ENCODE measurements at regions of chr1 and their contacts with region 1.

Region 1: GRCh38 chr1:20696397-20697329 is 21.1 kb downstream of the KIF17 start:
- DNase-seq: peak; percentile 87 to 89
- ATAC-seq: peak; percentile 94
- H3K4me3 ChIP-seq: peak overlapping the region; percentile 48
- H3K27ac ChIP-seq: peak overlapping the region; percentile 97
- H3K4me1 ChIP-seq: peaks cover 28% of the 10 kb centered on the region
- CTCF ChIP-seq: peak; percentile 81
- EP300 ChIP-seq: no peak
- POLR2A ChIP-seq: no peak
- RAD21 ChIP-seq: peak; percentile 81 to 96

Region 2: DNA sequence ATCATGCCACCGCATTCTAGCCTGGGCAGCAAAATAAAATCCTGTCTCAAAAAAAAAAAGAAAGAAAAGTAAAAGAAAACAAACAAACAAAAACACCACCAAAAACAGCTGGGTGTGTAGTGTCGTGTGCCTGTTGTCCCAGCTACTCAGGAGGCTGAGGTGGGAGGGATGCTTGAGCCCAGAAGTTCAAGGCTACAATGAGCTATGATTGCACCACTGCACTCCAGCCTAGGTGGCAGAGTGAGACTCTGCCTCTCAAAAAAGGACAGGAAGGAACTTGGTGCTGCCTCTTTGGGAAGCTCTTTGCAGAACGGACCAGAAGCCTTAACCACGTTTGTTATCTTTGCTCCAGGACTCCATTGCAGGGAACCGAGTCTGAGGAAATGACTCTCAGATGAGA is 10.2 kb after region 1 on chr1:
- CTCF ChIA-PET with region 1: interaction called, 24 read pairs
- POLR2A ChIA-PET with region 1: no interaction called
- DNase-seq: no peak
- ATAC-seq: no peak
- H3K4me3 ChIP-seq: no peak overlapping the region
- H3K27ac ChIP-seq: no peak overlapping the region
- H3K4me1 ChIP-seq: no peaks in the 10 kb centered on the region
- CTCF ChIP-seq: no peak
- EP300 ChIP-seq: no peak
- POLR2A ChIP-seq: no peak
- RAD21 ChIP-seq: no peak

Region 3: DNA sequence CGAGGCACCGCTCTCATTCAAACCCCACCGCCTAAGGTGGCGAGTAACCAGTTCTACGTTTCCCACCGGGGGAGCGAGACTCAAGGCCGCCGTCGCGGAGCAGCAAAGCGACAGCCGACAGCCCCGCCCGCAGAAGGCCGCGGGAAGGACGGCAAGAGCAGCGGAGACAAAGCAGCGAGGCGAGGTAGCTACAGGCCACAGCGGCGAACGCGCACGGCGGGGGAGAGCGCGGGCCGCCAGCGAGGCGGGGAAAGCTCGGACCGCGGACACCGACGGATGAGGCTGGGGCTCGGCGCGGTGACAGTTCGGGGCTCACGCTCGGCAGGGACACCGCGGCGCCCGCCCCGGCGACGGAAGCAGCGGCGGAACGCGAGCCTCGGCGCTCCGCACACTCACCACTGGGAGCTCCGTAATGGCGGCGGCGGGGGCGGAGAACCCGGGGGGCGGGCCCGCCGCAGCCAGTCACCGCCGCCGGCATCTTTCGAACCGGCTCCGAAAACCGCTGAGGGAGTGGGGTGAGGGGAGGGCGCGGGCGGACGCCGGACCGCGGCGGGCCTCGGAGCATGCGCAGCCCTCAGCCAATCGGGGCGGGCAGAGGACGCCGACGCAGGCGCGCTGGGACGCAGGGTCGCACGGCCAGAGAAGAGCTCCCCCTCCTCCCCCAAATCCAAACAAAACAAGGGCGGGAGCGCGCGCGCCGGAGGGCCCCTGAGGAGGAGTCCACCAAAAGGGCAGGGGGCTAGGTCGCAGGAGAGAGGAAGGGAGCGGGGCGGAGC is 89.8 kb after region 1 on chr1:
- CTCF ChIA-PET with region 1: interaction called, 18 read pairs
- POLR2A ChIA-PET with region 1: interaction called, 9 read pairs
- DNase-seq: peak; percentile 68 to 95
- ATAC-seq: peak; percentile 86 to 89
- H3K4me3 ChIP-seq: peak overlapping the region; percentile 74
- H3K27ac ChIP-seq: peak overlapping the region; percentile 91 to 100
- H3K4me1 ChIP-seq: peaks cover 31% of the 10 kb centered on the region
- CTCF ChIP-seq: no peak
- EP300 ChIP-seq: no peak
- POLR2A ChIP-seq: peak; percentile 68
- RAD21 ChIP-seq: no peak

Region 4: GRCh38 chr1:21184276-21184675 is 487.6 kb after region 1 on chr1:
- CTCF ChIA-PET with region 1: interaction called, 10 read pairs
- POLR2A ChIA-PET with region 1: no interaction called
- DNase-seq: no peak
- ATAC-seq: no peak
- H3K4me3 ChIP-seq: no peak overlapping the region
- H3K27ac ChIP-seq: no peak overlapping the region
- H3K4me1 ChIP-seq: no peaks in the 10 kb centered on the region
- CTCF ChIP-seq: no peak
- EP300 ChIP-seq: no peak
- POLR2A ChIP-seq: no peak
- RAD21 ChIP-seq: no peak

Region 5: DNA sequence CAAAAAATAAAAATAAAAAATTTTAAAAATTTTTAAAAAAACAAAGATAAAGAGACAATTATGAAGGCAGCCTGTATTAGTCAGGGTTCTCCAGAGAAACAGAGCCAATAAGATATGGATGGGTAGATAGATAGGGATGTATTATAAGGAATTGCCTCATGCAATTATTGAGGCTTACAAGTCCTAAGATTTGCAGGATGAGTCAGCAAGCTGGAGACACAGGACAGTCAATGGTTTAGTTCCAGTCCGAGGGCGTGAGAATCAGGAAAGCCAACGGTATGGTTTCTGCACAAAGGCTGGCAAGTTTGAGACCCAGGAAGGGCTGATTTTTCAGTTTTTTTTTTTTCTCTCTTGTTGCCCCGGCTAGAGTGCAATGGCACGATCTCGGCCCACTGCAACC is 504.1 kb after region 1 on chr1:
- CTCF ChIA-PET with region 1: interaction called, 55 read pairs
- POLR2A ChIA-PET with region 1: interaction called, 5 read pairs
- DNase-seq: no peak
- ATAC-seq: no peak
- H3K4me3 ChIP-seq: no peak overlapping the region
- H3K27ac ChIP-seq: no peak overlapping the region
- H3K4me1 ChIP-seq: no peaks in the 10 kb centered on the region; the same call in 2 of the 3 replicates
- CTCF ChIP-seq: no peak
- EP300 ChIP-seq: no peak
- POLR2A ChIP-seq: no peak
- RAD21 ChIP-seq: no peak

Measured in A549 (cell line).